Activated CD4-positive, alpha-beta T cell treated with anti-CD3 and anti-CD28 coated beads for 36 hours (primary cell): ENCODE measurements at regions of chr1 and their contacts with region 1.

Region 1: GRCh38 chr1:207077470-207078377 is 10.9 kb upstream of the C4BPB start:
- DNase-seq: peak; percentile 76
- ATAC-seq: peak; percentile 92
- H3K4me3 Mint-ChIP-seq: no peak overlapping the region
- H3K27ac Mint-ChIP-seq: no peak overlapping the region
- H3K4me1 Mint-ChIP-seq: no peaks in the 10 kb centered on the region
- H3K27me3 Mint-ChIP-seq: peaks cover 8% of the 10 kb centered on the region

Region 2: GRCh38 chr1:206935491-206936067 is 142.1 kb before region 1 on chr1:
- CTCF ChIA-PET with region 1: interaction called, 3 read pairs
- POLR2A ChIA-PET with region 1: no interaction called
- intact Hi-C with region 1: loop called in 1 of 2 experiments (anchors 2 kb)
- DNase-seq: peak; percentile 79
- ATAC-seq: peak; percentile 76
- H3K4me3 Mint-ChIP-seq: no peak overlapping the region
- H3K27ac Mint-ChIP-seq: no peak overlapping the region
- H3K4me1 Mint-ChIP-seq: peaks cover 23% of the 10 kb centered on the region
- H3K27me3 Mint-ChIP-seq: no peaks in the 10 kb centered on the region

Region 3: GRCh38 chr1:207004981-207005830 is 72.5 kb before region 1 on chr1:
- CTCF ChIA-PET with region 1: interaction called, 3 read pairs
- POLR2A ChIA-PET with region 1: no interaction called
- intact Hi-C with region 1: loop called in 1 of 2 experiments (anchors 5 kb)
- DNase-seq: peak; percentile 64
- ATAC-seq: peak; percentile 57
- H3K4me3 Mint-ChIP-seq: no peak overlapping the region
- H3K27ac Mint-ChIP-seq: no peak overlapping the region
- H3K4me1 Mint-ChIP-seq: peaks cover 2% of the 10 kb centered on the region
- H3K27me3 Mint-ChIP-seq: peaks cover 4% of the 10 kb centered on the region

Region 4: DNA sequence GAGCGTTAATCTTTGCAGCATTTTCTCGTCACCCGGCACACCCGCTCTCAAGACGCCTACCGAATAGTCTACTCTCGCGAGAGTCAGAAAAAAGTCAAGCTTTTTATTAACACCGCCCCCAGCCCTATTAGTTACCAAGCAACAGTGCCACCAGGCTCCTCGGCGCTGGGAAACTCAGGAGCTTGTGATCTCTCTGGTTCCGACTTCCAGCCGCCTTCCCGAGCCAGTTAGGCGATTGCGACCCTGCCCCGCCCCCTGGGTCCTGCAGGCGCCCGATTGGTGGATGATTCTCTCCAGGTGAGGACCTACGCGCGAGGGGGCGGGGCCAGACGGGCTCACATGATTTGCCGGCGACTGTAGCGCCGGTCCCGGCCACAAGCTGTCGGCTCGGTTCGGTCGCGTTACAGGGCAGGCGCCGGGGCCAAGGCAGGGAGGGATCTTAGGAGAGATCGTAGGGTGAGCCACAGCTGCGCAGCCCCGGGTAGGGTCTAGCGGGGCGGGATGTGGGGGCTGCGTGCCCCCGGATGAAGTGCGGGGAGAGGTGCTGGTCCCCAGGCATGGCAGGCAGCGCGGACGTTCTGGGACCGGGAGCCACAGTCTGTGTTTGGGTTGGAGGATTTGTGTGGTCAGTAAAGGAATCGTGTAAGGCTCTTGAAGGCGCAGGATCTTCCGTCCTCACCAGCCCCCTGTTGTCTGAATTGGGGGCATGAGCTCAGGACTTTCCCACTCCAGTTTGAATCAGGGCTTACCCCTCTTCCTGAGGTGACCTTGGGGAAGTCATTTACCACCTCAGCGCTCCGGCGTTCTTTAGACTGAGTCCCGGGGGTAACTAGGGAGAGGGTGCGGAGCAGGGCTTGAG is 24.6 kb before region 1 on chr1 and contains the start of gene PFKFB2:
- CTCF ChIA-PET with region 1: interaction called, 10 read pairs
- POLR2A ChIA-PET with region 1: no interaction called
- intact Hi-C with region 1: loop called (anchors 1 kb)
- DNase-seq: peak; percentile 96
- ATAC-seq: peak; percentile 83
- H3K4me3 Mint-ChIP-seq: peak within 1 kb of the TSS; percentile 99
- H3K27ac Mint-ChIP-seq: peak within 1 kb of the TSS; percentile 89
- H3K4me1 Mint-ChIP-seq: peaks cover 39% of the 10 kb centered on the region
- H3K27me3 Mint-ChIP-seq: no peaks in the 10 kb centered on the region
- total RNA-seq, gene PFKFB2: 3.1 to 3.5 TPM

Region 5: GRCh38 chr1:207058878-207059867 is 18.6 kb before region 1 on chr1:
- CTCF ChIA-PET with region 1: interaction called, 13 read pairs
- POLR2A ChIA-PET with region 1: no interaction called
- intact Hi-C with region 1: no loop called
- DNase-seq: no peak
- ATAC-seq: no peak
- H3K4me3 Mint-ChIP-seq: no peak overlapping the region
- H3K27ac Mint-ChIP-seq: no peak overlapping the region
- H3K4me1 Mint-ChIP-seq: peaks cover 2% of the 10 kb centered on the region
- H3K27me3 Mint-ChIP-seq: no peaks in the 10 kb centered on the region